ENCODE measurements at regions of chr19 and their contacts with region 1.

Region 1: DNA sequence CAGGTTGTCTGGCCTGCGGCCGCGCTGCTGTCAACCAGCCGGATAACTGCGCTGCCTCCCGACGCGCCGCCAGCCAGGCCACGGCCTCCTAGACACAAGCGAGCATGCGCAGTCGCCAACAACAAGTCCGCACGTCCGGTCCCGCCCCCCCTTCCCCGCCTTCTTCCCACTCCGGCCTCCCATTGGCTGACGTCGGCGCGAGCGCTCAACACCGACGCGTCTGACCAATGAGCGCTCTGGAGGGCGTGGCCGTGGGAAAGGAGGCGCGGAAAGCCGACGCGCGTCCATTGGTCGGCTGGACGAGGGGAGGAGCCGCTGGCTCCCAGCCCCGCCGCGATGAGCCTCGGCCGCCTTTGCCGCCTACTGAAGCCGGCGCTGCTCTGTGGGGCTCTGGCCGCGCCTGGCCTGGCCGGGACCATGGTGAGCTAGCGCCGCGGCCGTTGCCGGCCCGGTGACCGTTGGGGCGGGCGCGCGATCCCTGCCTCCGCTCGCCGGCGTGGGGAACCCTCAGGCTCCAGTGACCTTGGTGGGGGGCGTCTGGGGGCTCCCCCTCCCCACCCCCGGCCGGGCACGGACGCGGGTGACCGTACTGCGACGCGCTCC is at the start of gene GPX4:
- DNase-seq: peak; percentile 99
- H3K4me3 ChIP-seq: peak within 1 kb of the TSS; percentile 82
- H3K27ac ChIP-seq: peak within 1 kb of the TSS; percentile 97
- H3K27me3 ChIP-seq: no peaks in the 10 kb centered on the region
- CTCF ChIP-seq: no peak
- polyA plus RNA-seq, gene GPX4: 627 and 865 TPM in 2 replicates

Region 2: GRCh38 chr19:984165-984967 is 119.4 kb before region 1 on chr19 and contains the start of gene WDR18:
- CTCF ChIA-PET with region 1: no interaction called
- POLR2A ChIA-PET with region 1: no interaction called
- DNase-seq: peak; percentile 49
- H3K4me3 ChIP-seq: peak within 1 kb of the TSS; percentile 98
- H3K27ac ChIP-seq: peak within 1 kb of the TSS; percentile 86
- H3K27me3 ChIP-seq: no peaks in the 10 kb centered on the region
- CTCF ChIP-seq: no peak
- polyA plus RNA-seq, gene WDR18: 24.5 and 36.3 TPM in 2 replicates

Region 3: GRCh38 chr19:1039646-1040475 is 63.9 kb before region 1 on chr19 and contains the start of gene ABCA7:
- CTCF ChIA-PET with region 1: no interaction called
- POLR2A ChIA-PET with region 1: interaction called, 22 read pairs
- DNase-seq: peak; percentile 95
- H3K4me3 ChIP-seq: peak within 1 kb of the TSS; percentile 65
- H3K27ac ChIP-seq: peak within 1 kb of the TSS; percentile 52
- H3K27me3 ChIP-seq: no peaks in the 10 kb centered on the region
- CTCF ChIP-seq: no peak; the same call in 1 of the 2 replicates
- polyA plus RNA-seq, gene ABCA7: 1.5 and 1.6 TPM in 2 replicates

Region 4: DNA sequence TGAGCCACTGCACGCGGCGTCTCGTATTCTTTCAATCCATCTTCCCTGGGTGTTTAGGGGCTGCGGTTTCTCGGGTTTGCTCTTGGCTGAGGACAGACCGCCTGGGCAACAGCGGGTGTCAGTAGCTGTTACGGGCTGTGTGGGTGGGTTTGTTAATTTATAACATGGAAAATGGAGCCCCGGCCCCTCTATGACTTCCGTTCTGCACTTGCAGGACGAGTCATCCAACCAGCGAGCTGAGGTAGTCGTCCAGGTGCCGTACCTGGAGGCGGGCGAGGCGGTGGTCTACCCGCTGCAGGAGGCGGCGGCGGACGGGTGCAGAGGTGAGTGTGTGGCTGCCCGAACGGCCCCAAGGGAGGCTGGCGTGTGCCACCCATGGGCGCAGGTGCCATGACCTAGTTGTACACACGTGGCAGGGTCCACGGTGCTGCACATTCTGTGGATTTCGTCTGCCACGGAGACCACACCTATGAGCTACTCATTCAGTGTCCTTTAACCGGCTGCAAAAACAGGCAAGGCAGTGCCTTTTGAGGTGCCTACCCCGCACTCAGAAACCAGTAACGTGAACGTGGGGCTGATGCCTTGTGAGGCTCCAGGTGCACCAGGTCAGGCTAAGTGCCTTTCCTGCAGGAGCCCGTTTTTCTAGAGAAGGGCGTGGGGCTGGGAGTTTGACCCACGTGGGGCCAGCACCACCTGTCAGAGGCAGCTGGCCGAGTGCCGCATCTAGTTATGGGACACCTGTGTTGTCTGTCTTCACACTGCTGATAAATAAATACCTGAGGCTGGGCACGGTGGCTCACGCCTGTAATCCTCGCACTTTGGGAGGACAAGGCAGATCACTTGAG is 19.6 kb before region 1 on chr19:
- CTCF ChIA-PET with region 1: no interaction called
- POLR2A ChIA-PET with region 1: interaction called, 10 read pairs
- DNase-seq: no peak
- H3K4me3 ChIP-seq: no peak overlapping the region
- H3K27ac ChIP-seq: no peak overlapping the region
- H3K27me3 ChIP-seq: no peaks in the 10 kb centered on the region
- CTCF ChIP-seq: no peak

Region 5: DNA sequence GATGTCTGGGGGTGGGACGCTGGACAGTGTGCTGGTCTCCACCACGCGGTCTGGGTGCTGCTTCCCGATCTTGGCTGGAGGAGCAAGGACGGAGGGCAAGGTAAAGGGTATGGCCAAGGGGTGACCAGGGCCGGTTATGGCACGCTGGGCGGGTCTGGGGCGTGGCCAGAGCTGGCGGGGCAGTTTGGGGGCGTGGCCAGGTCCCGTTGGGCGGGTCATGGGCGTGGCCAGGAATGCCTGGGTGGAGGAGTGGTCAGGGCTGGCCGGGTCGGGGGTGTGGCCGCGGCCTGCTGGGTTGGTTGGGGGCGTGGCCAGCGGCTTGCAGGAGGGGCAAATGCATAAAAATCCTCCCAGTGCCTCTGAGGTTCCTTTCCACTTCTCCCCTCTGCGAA is 19.2 kb after region 1 on chr19:
- CTCF ChIA-PET with region 1: no interaction called
- POLR2A ChIA-PET with region 1: no interaction called
- DNase-seq: no peak
- H3K4me3 ChIP-seq: no peak overlapping the region
- H3K27ac ChIP-seq: no peak overlapping the region
- H3K27me3 ChIP-seq: no peaks in the 10 kb centered on the region
- CTCF ChIP-seq: no peak

Region 6: DNA sequence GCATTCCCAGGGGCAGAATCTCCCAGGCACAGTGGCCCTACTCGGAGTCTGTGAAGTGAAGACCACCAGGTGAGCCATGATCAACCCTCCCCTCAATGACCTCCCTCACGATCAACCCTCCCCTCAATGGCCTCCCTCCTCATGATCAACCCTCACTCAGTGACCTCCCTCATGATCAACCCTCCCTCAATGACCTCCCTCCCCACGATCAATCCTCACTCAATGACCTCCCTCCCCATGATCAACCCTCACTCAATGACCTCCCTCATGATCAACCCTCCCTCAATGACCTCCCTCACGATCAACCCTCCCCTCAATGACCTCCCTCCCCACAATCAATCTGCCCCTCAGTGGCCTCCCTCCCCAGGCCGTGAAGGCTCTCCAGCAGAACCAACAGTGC is 38.1 kb after region 1 on chr19:
- CTCF ChIA-PET with region 1: no interaction called
- POLR2A ChIA-PET with region 1: no interaction called
- DNase-seq: no peak
- H3K4me3 ChIP-seq: no peak overlapping the region
- H3K27ac ChIP-seq: no peak overlapping the region
- H3K27me3 ChIP-seq: no peaks in the 10 kb centered on the region
- CTCF ChIP-seq: no peak

Region 7: GRCh38 chr19:1161716-1162115 is 57.9 kb after region 1 on chr19:
- CTCF ChIA-PET with region 1: no interaction called
- POLR2A ChIA-PET with region 1: no interaction called
- DNase-seq: no peak
- H3K4me3 ChIP-seq: no peak overlapping the region
- H3K27ac ChIP-seq: no peak overlapping the region
- H3K27me3 ChIP-seq: no peaks in the 10 kb centered on the region
- CTCF ChIP-seq: no peak